Posterior vena cava (tissue), 2 donors: ENCODE measurements at regions of chr6 and their contacts with region 1.

Region 1: DNA sequence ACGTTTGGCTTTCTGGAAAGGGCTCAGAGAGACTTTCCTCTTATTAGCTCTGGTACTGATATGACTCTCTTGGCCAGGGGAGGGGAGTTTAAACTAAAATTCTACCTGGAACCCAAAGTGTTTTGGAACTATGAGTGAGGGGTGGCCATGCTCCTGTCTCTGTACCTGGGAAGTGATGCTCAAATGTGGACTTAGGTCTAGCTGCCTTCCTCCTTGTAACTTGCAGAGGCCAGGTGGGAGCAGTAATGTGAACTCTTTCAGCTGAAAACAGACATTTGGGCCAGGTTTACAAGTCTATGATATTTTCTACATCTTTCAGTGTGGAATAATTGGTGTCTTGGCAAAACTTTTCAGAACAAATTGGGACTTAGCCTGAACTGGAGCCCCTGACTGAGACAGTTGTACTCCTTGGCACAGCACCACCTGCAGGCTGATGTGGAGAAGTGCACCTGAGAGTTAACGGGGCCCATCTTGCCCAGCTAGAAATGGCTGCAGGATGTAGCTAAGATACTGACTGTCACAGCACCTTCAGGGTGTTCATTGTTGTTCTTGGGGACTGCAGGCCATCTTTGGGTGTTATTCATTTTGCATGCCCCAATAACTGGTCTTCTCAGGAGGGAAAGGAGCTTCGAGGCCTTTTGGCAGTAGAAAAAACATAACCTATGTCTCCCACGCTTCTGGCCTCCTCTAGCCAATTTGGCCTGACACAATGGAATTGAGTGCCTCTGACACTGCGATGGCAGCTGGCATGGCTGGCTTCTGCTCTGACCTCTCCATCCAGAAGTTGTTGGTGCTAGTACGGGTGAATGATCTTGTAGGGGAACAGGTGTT is 37.1 kb downstream of the CD109 start:
- DNase-seq: peak; percentile 79

Region 2: DNA sequence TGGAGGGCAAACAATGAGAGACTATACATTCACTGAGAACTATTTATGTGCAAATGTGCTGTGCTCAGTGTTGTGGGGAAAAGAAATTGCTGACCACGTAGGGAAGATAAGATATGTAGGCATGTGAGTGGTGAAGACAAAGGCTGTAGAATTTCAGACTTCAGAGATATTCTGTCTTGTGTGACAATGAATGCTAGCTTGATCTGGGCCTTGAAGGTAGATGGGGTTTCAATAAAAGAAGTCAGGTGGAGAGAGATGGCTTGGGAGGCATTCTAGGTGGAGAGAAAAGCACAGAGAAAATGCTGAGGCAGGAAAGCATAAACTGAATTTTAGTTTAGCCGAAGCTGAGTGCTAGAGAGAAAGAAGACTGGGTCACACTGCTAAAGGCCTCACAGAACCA is 155.4 kb before region 1 on chr6:
- intact Hi-C with region 1: no loop called
- DNase-seq: no peak

Region 3: DNA sequence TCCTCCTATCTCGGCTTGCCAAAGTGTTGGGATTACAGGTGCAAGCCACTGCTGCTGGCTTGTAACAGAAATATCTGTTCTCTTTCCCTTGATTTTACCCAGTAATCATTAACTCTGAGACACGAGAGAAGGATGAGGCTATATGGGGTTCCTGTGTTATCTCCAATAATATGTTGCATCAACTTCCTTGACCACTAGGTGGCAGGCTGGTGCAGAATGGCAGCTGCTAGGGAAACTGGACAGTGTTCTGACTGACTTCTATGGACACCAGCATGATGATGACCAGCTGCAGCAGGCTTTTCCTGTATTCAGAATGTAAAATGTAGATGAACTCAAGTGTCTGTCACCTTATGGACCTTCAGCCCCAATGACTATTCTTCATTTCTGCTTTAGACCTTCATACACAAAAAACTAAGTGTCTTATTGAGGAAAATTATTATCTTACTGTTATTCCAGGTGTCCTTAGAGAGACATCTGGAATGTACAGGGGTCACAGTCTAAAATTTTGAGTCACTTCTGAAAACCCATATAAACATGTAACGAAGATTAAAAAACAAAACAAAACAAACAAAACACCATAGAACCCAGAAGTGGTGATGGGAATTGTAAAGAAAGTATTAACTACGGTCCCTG is 57.5 kb before region 1 on chr6:
- intact Hi-C with region 1: loop called (anchors 5 to 10 kb)
- DNase-seq: peak; percentile 83

Region 4: GRCh38 chr6:73798592-73798991 is 65.5 kb after region 1 on chr6:
- intact Hi-C with region 1: no loop called
- DNase-seq: no peak